ENCODE measurements at regions of chr11 and their contacts with region 1.

Region 1: GRCh38 chr11:68251765-68252164 is 20.0 kb downstream of the C11orf24 start:
- DNase-seq: no peak
- ATAC-seq: no peak
- H3K4me3 ChIP-seq: no peak overlapping the region
- H3K27ac ChIP-seq: no peak overlapping the region
- H3K4me1 ChIP-seq: no peaks in the 10 kb centered on the region
- H3K27me3 ChIP-seq: no peaks in the 10 kb centered on the region

Region 2: GRCh38 chr11:67745176-67745726 is 506.5 kb before region 1 on chr11:
- intact Hi-C with region 1: no loop called
- DNase-seq: no peak
- ATAC-seq: no peak
- H3K4me3 ChIP-seq: no peak overlapping the region
- H3K27ac ChIP-seq: no peak overlapping the region
- H3K4me1 ChIP-seq: no peaks in the 10 kb centered on the region
- H3K27me3 ChIP-seq: no peaks in the 10 kb centered on the region

Region 3: GRCh38 chr11:68099474-68100405 is 152.0 kb before region 1 on chr11:
- intact Hi-C with region 1: no loop called
- DNase-seq: peak; percentile 70 to 75 (median 71)
- ATAC-seq: peak; percentile 67 to 91
- H3K4me3 ChIP-seq: peak overlapping the region; percentile 9
- H3K27ac ChIP-seq: peak overlapping the region; percentile 37
- H3K4me1 ChIP-seq: peaks cover 2% of the 10 kb centered on the region
- H3K27me3 ChIP-seq: no peaks in the 10 kb centered on the region

Region 4: GRCh38 chr11:68164437-68164836 is 87.3 kb before region 1 on chr11:
- intact Hi-C with region 1: no loop called
- DNase-seq: no peak
- ATAC-seq: no peak
- H3K4me3 ChIP-seq: no peak overlapping the region
- H3K27ac ChIP-seq: no peak overlapping the region
- H3K4me1 ChIP-seq: no peaks in the 10 kb centered on the region
- H3K27me3 ChIP-seq: no peaks in the 10 kb centered on the region

Region 5: GRCh38 chr11:68383976-68384501 is 132.3 kb after region 1 on chr11:
- intact Hi-C with region 1: loop called in 3 of 4 experiments (anchors 5 kb)
- DNase-seq: peak; percentile 70 to 89 (median 88)
- ATAC-seq: no peak
- H3K4me3 ChIP-seq: no peak overlapping the region
- H3K27ac ChIP-seq: no peak overlapping the region
- H3K4me1 ChIP-seq: peaks cover 17% of the 10 kb centered on the region
- H3K27me3 ChIP-seq: no peaks in the 10 kb centered on the region

Measured in right cardiac atrium (tissue), 5 donors.